ENCODE measurements at regions of chr17 and their contacts with region 1.

Region 1: DNA sequence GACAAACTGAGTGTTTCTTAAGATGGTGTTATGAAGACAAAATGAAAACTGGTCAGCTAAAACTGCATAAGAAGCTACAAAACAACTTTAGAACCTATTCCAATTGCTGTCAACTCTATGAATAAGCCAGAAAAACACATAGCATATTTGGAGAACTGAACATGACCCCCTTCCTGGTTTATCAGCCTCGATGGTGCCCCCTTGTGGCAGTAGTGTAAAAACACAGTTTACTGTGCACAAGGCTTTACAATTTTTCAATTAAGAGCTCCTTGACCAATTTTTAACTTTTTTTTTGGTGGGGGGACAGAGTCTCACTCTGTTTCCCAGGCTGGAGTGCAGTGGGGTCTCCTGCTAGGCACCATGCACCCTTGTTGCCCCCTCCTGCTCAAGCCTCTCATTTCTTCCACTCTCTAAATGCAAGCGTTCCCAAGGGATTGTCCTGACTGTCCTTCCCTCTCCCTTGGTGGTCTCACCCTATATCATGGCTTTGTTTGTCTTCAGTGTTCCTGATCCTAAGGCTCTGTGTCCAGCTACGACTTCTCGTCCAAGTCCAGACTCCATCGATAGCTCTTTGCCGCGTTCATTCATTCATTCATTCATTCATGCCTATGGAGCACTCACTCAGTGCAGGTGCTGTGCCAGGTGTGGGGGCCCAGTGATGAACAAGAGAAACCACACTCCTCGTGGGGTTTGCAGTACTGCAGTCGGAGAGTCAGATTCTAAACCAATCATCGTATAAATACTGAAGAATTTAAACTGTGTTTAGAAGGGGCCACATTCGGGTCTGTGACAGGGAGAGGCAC is 7.5 kb downstream of the EIF1 start:
- DNase-seq: peak; percentile 66 to 84 (median 67)
- H3K4me3 ChIP-seq: no peak overlapping the region
- H3K4me3 Mint-ChIP-seq: peak overlapping the region in 1 of 7 donors; percentile 60
- H3K27ac ChIP-seq: no peak overlapping the region
- H3K27ac Mint-ChIP-seq: peak overlapping the region in 6 of 8 donors; percentile 6 to 83 (median 78)
- H3K4me1 ChIP-seq: peaks cover 10% of the 10 kb centered on the region
- H3K4me1 Mint-ChIP-seq: peaks cover 21 to 35% (median 27%) of the 10 kb centered on the region in 3 donors
- H3K27me3 ChIP-seq: no peaks in the 10 kb centered on the region
- H3K27me3 Mint-ChIP-seq: peaks cover 2 to 3% of the 10 kb centered on the region in 2 donors

Region 2: DNA sequence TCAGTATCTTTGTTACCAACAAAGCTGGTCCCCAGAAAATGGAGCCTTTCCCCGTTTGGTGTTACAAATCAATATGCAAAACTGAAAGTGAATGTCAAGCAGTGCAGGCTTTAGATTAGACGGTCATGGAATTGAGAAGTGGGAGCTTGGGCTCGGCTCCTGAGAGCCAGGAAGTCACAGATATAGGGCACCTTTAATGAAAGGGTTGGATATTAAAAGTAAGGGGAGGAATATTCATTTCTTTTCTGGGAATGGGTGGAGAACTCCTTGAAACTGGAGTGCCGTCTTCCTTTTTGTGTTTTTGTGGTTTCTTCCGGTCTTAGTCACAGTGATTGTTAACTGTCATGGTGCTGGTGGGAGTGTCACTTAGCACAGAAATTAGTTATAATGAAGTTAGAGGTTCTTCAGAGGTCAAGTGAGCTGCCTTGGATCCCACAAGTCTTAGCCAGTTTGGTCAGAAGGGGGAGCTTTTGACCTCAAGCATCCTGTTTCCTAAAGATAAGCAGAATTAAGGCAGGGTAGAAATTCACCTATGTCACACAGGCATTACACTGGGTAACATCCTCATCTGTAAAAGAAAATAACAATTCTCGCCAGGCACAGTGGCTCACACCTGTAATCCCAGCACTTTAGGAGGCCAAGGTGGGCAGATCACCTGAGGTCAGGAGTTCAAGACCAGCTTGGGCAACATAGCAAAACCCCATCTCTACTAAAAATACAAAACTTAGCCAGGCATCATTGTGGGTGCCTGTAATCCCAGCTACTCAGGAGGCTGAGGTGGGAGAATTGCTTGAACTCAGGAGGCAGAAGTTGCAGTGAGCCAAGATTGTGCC is 17.0 kb before region 1 on chr17:
- CTCF ChIA-PET with region 1: interaction called, 74 read pairs
- POLR2A ChIA-PET with region 1: interaction called, 178 read pairs
- DNase-seq: peak; percentile 27 to 75 (median 52)
- H3K4me3 ChIP-seq: peak overlapping the region; percentile 55
- H3K4me3 Mint-ChIP-seq: peak overlapping the region; percentile 71 to 92 (median 87)
- H3K27ac ChIP-seq: peak overlapping the region; percentile 62
- H3K27ac Mint-ChIP-seq: peak overlapping the region; percentile 80 to 98 (median 96)
- H3K4me1 ChIP-seq: peaks cover 16% of the 10 kb centered on the region
- H3K4me1 Mint-ChIP-seq: peaks cover 20 to 38% (median 24%) of the 10 kb centered on the region in 3 donors
- H3K27me3 ChIP-seq: no peaks in the 10 kb centered on the region
- H3K27me3 Mint-ChIP-seq: peaks cover 0 to 2% of the 10 kb centered on the region in 2 donors

Region 3: GRCh38 chr17:41710468-41711090 is 14.4 kb after region 1 on chr17:
- CTCF ChIA-PET with region 1: interaction called, 35 read pairs
- POLR2A ChIA-PET with region 1: no interaction called
- DNase-seq: no peak
- H3K4me3 ChIP-seq: no peak overlapping the region
- H3K4me3 Mint-ChIP-seq: no peak overlapping the region
- H3K27ac ChIP-seq: no peak overlapping the region
- H3K27ac Mint-ChIP-seq: no peak overlapping the region
- H3K4me1 ChIP-seq: no peaks in the 10 kb centered on the region
- H3K4me1 Mint-ChIP-seq: no peaks in the 10 kb centered on the region
- H3K27me3 ChIP-seq: no peaks in the 10 kb centered on the region
- H3K27me3 Mint-ChIP-seq: peaks cover 18 to 27% of the 10 kb centered on the region in 2 donors

Region 4: DNA sequence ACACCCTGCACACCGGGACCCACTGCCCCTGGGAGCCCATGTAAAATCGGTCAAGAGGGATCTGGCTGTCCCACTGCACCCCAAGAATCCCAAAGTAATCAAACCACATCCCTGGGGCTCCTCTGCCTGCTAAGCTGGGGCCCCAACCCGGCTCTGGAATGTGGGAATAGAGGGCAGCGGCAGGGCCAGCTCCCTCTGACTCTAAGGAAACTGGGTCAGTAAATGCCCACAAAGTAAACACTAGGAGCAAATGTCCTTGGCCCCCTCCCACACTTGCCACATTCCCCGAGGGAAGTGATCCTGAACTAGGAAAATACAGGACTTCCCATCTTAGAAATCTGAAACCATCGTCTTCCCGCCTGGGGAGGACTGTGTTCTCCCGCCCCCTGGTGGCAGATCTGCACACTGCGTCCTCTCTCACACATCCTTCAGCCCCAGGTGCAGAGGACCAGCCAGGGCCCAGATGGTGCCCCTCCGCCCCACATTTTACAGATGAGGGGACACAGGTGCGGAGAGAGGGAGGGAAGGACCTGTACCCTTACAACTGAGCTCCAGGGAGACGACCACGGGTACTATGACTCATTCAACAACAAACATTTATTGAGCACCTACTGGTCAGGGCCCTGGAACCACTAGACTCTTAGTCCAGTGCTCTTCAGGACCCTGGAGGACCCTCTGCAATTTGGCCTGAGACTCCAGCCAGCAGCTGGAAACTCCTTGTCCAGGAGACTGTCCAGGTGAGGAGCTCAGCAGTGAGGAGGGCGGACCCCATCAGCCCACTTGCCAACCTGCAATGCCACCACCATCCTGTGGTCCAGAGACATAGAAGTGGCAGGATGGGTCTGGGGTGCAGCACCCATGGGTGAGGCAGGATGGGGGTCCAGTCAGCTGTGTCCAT is 105.5 kb after region 1 on chr17:
- CTCF ChIA-PET with region 1: no interaction called
- POLR2A ChIA-PET with region 1: no interaction called
- DNase-seq: peak; percentile 52 to 76 (median 61)
- H3K4me3 ChIP-seq: no peak overlapping the region
- H3K4me3 Mint-ChIP-seq: no peak overlapping the region
- H3K27ac ChIP-seq: no peak overlapping the region
- H3K27ac Mint-ChIP-seq: peak overlapping the region in 5 of 8 donors; percentile 25 to 42 (median 35)
- H3K4me1 ChIP-seq: no peaks in the 10 kb centered on the region
- H3K4me1 Mint-ChIP-seq: peaks cover 4 to 6% (median 5%) of the 10 kb centered on the region in 3 donors
- H3K27me3 ChIP-seq: no peaks in the 10 kb centered on the region
- H3K27me3 Mint-ChIP-seq: peaks cover 6 to 8% of the 10 kb centered on the region in 2 donors